Natural killer cell (primary cell): ENCODE measurements at regions of chr7 and their contacts with region 1.

Region 1: DNA sequence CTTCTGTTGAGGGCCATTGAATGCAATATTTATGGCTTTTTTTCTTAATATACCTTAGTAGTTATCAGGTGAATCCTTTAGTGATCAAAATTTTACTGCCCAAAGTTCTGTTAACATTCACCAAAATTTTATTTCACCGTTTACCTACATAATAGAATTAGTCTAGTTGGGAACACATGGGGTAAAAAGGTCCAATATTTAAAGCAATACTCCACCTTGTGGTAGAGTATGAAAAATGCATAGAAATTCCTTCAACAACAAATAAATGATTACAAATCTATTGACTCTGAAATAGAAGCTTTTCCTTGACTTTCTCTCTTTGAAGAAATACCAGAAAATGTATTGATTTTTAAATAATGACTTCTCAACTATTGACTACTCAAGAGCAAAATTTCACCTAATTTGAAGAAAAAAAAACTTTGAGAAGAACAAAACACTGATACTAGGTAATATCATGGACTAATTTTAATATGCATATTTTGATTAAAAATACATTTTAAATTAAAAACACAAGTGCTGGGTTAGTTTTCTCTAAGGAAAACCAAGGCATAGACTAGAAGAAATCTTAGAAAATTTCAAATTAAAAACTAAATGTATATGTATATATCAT is 43.3 kb downstream of the POLR1F start:
- DNase-seq: peak in 1 of 2 donors; percentile 35
- ATAC-seq: peak in 1 of 3 donors; percentile 50
- H3K4me3 ChIP-seq: no peak overlapping the region
- H3K4me3 Mint-ChIP-seq: no peak overlapping the region
- H3K27ac ChIP-seq: no peak overlapping the region
- H3K27ac Mint-ChIP-seq: no peak overlapping the region
- H3K4me1 ChIP-seq: no peaks in the 10 kb centered on the region
- H3K4me1 Mint-ChIP-seq: peaks cover 0 to 6% of the 10 kb centered on the region in 2 donors
- H3K27me3 ChIP-seq: no peaks in the 10 kb centered on the region
- H3K27me3 Mint-ChIP-seq: no peaks in the 10 kb centered on the region
- CTCF ChIP-seq: peak; percentile 70

Region 2: GRCh38 chr7:18352339-18353255 is 1312.9 kb before region 1 on chr7:
- intact Hi-C with region 1: loop called (anchors 10 kb)
- DNase-seq: peak in 1 of 2 donors; percentile 49
- ATAC-seq: peak in 1 of 3 donors; percentile 46
- H3K4me3 ChIP-seq: no peak overlapping the region
- H3K4me3 Mint-ChIP-seq: no peak overlapping the region
- H3K27ac ChIP-seq: no peak overlapping the region
- H3K27ac Mint-ChIP-seq: no peak overlapping the region
- H3K4me1 ChIP-seq: no peaks in the 10 kb centered on the region
- H3K4me1 Mint-ChIP-seq: peaks cover 9 to 10% of the 10 kb centered on the region in 2 donors
- H3K27me3 ChIP-seq: no peaks in the 10 kb centered on the region
- H3K27me3 Mint-ChIP-seq: no peaks in the 10 kb centered on the region
- CTCF ChIP-seq: no peak

Region 3: GRCh38 chr7:19617901-19618300 is 47.6 kb before region 1 on chr7:
- intact Hi-C with region 1: no loop called
- DNase-seq: no peak
- ATAC-seq: no peak
- H3K4me3 ChIP-seq: no peak overlapping the region
- H3K4me3 Mint-ChIP-seq: no peak overlapping the region
- H3K27ac ChIP-seq: no peak overlapping the region
- H3K27ac Mint-ChIP-seq: no peak overlapping the region
- H3K4me1 ChIP-seq: no peaks in the 10 kb centered on the region
- H3K4me1 Mint-ChIP-seq: no peaks in the 10 kb centered on the region
- H3K27me3 ChIP-seq: no peaks in the 10 kb centered on the region
- H3K27me3 Mint-ChIP-seq: no peaks in the 10 kb centered on the region
- CTCF ChIP-seq: no peak